Transverse colon (tissue), 4 donors: ENCODE measurements at regions of chr3 and their contacts with region 1.

Region 1: GRCh38 chr3:39189959-39190269 is 2.5 kb downstream of the XIRP1 start:
- DNase-seq: peak; percentile 74
- H3K4me3 ChIP-seq: no peak overlapping the region
- H3K27ac ChIP-seq: no peak overlapping the region
- H3K4me1 ChIP-seq: no peaks in the 10 kb centered on the region
- H3K27me3 ChIP-seq: no peaks in the 10 kb centered on the region
- CTCF ChIP-seq: peak; percentile 76 to 85 (median 81)
- EP300 ChIP-seq: no peak
- POLR2A ChIP-seq: no peak

Region 2: GRCh38 chr3:38834110-38834509 is 355.8 kb before region 1 on chr3:
- in situ Hi-C with region 1: no loop called
- intact Hi-C with region 1: no loop called
- DNase-seq: peak; percentile 9
- H3K4me3 ChIP-seq: no peak overlapping the region
- H3K27ac ChIP-seq: peak overlapping the region in 1 of 4 donors; percentile 21
- H3K4me1 ChIP-seq: peaks cover 0 to 2% (median 0%) of the 10 kb centered on the region in 4 donors
- H3K27me3 ChIP-seq: no peaks in the 10 kb centered on the region
- CTCF ChIP-seq: no peak
- EP300 ChIP-seq: no peak
- POLR2A ChIP-seq: no peak

Region 3: DNA sequence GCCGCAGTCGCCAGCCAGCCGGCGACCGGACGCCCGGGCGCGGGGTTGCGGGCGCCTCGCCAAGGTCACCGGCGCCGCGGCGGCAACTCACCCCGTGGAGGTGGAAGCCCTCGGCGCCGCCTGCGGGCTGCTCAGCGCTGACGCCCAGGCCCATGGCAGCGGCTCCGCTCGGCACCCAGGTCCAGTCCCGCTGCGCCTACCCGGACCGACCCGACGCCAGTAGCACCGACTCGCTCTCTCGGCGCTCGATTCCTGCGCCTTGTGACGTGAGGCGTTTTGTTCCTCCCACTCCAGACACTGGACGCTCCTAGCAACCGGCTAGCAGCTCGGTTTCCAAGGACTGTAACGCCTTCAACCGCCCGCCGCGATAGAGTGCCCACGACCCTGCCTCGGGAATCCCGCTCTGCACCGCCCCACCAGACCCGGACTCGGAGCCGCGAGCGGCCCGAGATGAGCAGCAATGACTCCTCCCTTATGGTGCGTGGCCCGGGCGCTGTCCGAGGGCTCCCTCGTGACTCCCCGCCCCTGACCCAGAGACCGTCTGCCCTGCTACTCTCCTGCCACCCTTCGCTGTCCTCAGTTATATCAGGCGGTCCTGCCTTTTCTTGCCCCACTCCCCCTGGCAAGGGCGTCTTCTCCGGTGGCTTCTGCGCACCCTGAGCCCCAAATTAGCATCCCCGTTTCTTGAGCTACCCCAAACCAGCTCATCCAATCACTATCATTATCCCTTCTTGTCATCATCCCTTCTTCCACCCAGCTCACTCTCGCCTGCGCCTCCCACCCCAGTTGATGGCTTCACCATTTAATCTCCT is 82.3 kb before region 1 on chr3 and contains the starts of genes GORASP1 and TTC21A:
- in situ Hi-C with region 1: no loop called
- intact Hi-C with region 1: loop called (anchors 5 kb)
- DNase-seq: peak; percentile 91
- H3K4me3 ChIP-seq: peak within 1 kb of the TSS; percentile 73 to 95 (median 90)
- H3K27ac ChIP-seq: peak within 1 kb of the TSS; percentile 96 to 99 (median 97)
- H3K4me1 ChIP-seq: peaks cover 25 to 45% (median 35%) of the 10 kb centered on the region in 4 donors
- H3K27me3 ChIP-seq: no peaks in the 10 kb centered on the region
- CTCF ChIP-seq: no peak
- EP300 ChIP-seq: no peak
- POLR2A ChIP-seq: peak; percentile 74
- total RNA-seq, gene GORASP1: 86.8 to 135 (median 96.3) TPM
- total RNA-seq, gene TTC21A: 6.8 to 101 (median 30.3) TPM